ENCODE measurements at regions of chr9 and their contacts with region 1.

Region 1: DNA sequence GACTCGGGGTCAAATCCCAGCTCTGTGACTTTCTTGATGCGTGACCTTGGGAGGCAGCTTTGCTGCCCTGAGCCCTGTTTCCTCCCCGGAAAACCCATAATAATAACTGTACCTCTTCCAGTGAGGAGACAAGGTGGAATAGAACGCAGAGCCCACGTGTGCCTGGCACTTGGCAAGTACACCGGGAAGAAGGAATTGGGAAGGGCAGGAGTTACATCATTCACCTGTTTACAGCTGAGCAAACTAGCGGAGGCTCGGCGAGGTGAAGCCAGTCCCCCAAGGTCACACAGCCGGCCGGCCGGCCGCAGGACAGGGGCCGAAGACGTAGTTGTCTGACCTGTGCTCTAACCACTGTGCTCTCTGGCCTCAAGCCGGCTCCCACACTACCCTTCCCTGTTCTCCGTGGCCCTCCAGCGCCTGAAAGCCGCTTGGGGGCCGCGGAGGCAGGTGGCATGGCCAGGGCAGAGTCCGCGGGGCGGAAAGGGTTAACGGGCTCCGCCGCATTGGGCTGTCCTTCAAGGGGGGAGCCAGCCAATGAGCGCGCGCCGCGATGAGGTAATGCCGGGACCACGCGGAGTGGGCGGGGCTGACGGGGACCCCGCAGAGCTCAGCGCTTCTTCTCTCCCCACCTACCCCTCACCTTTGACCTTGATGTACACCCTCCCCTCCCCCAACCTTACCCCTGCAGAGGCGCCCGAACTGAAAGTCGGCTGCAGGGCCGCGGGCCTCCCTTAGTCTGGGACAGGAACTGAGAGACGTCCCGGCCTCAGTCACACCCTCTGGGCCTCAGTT is 125.2 kb downstream of the C9orf50 start:
- DNase-seq: peak; percentile 95 to 98 (median 96)
- H3K4me3 ChIP-seq: peak overlapping the region in 2 of 4 donors; percentile 74 to 79
- H3K27ac ChIP-seq: peak overlapping the region; percentile 91 to 100 (median 95)
- H3K4me1 ChIP-seq: peaks cover 42 to 73% of the 10 kb centered on the region in 2 donors
- H3K27me3 ChIP-seq: no peaks in the 10 kb centered on the region
- CTCF ChIP-seq: peak in 1 of 6 experiments; percentile 14
- POLR2A ChIP-seq: peak in 1 of 2 donors; percentile 16

Region 2: GRCh38 chr9:129080602-129081387 is 414.9 kb before region 1 on chr9 and contains the start of gene DOLPP1:
- intact Hi-C with region 1: no loop called
- DNase-seq: peak; percentile 99 to 100 (median 100)
- H3K4me3 ChIP-seq: peak within 1 kb of the TSS; percentile 43 to 77 (median 63)
- H3K27ac ChIP-seq: peak within 1 kb of the TSS in 4 of 5 donors; percentile 57 to 88 (median 76)
- H3K4me1 ChIP-seq: peaks cover 14 to 18% of the 10 kb centered on the region in 2 donors
- H3K27me3 ChIP-seq: no peaks in the 10 kb centered on the region
- CTCF ChIP-seq: no peak
- POLR2A ChIP-seq: peak; percentile 39 to 61
- total RNA-seq, gene DOLPP1: 9.5 to 31.8 (median 22.9) TPM

Region 3: GRCh38 chr9:129549685-129550084 is 54.0 kb after region 1 on chr9:
- intact Hi-C with region 1: loop called in 1 of 2 experiments (anchors 5 kb)
- DNase-seq: peak in 3 of 7 donors; percentile 37 to 75 (median 71)
- H3K4me3 ChIP-seq: peak overlapping the region in 1 of 4 donors; percentile 50
- H3K27ac ChIP-seq: peak overlapping the region in 4 of 5 donors; percentile 4 to 84 (median 58)
- H3K4me1 ChIP-seq: peaks cover 20 to 29% of the 10 kb centered on the region in 2 donors
- H3K27me3 ChIP-seq: no peaks in the 10 kb centered on the region
- CTCF ChIP-seq: no peak
- POLR2A ChIP-seq: no peak

Region 4: GRCh38 chr9:129602598-129603415 is 107.1 kb after region 1 on chr9:
- intact Hi-C with region 1: loop called (anchors 5 kb)
- DNase-seq: no peak
- H3K4me3 ChIP-seq: no peak overlapping the region
- H3K27ac ChIP-seq: no peak overlapping the region
- H3K4me1 ChIP-seq: peaks cover 3 to 10% of the 10 kb centered on the region in 2 donors
- H3K27me3 ChIP-seq: no peaks in the 10 kb centered on the region
- CTCF ChIP-seq: no peak
- POLR2A ChIP-seq: no peak

Region 5: GRCh38 chr9:130331573-130331972 is 835.8 kb after region 1 on chr9:
- intact Hi-C with region 1: no loop called
- DNase-seq: no peak
- H3K4me3 ChIP-seq: no peak overlapping the region
- H3K27ac ChIP-seq: peak overlapping the region in 1 of 5 donors; percentile 45
- H3K4me1 ChIP-seq: peaks cover 0 to 9% of the 10 kb centered on the region in 2 donors
- H3K27me3 ChIP-seq: peaks cover 14% of the 10 kb centered on the region
- CTCF ChIP-seq: no peak
- POLR2A ChIP-seq: no peak

Measured in adrenal gland (tissue), 19 donors.